ENCODE measurements at regions of chr9 and their contacts with region 1.

Region 1: GRCh38 chr9:38088006-38088925 is 19.2 kb upstream of the SHB start:
- DNase-seq: peak; percentile 22 to 51 (median 37)
- H3K4me3 ChIP-seq: no peak overlapping the region
- H3K27ac ChIP-seq: no peak overlapping the region
- H3K4me1 ChIP-seq: peaks cover 0 to 12% (median 2%) of the 10 kb centered on the region in 4 experiments
- H3K27me3 ChIP-seq: no peaks in the 10 kb centered on the region

Region 2: DNA sequence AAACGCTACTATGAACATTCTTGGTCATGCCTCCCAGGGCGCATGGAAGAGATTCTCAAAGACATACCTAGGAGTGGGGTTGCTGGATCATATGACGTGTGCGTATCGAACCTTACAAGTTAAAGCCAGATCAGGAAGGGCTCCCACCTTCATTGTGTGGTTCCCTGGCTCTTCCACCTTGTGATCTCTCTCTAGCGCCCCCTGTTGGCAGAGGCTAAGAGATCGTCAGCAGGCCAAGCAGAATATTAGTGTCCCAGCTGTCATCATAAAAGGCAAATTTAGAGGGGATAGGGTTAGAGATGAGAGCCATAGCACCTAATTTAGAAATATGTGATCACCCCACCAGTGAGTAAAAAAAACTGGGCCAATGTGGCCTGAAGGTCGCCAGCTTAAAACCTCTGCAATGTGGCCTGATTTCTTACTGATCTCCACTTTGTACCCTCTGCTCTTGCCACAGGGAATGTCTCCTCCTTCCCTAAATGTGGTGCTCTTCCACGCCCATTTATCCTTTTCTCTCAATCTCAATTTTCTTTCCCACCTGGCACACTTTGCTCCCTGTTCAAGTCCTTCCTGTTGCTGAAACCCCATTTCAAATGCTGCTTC is 72.4 kb after region 1 on chr9:
- CTCF ChIA-PET with region 1: interaction called, 10 read pairs
- POLR2A ChIA-PET with region 1: no interaction called
- DNase-seq: peak; percentile 61 to 75 (median 63)
- H3K4me3 ChIP-seq: no peak overlapping the region
- H3K27ac ChIP-seq: no peak overlapping the region
- H3K4me1 ChIP-seq: peaks cover 0 to 21% (median 18%) of the 10 kb centered on the region in 4 experiments
- H3K27me3 ChIP-seq: no peaks in the 10 kb centered on the region

Region 3: DNA sequence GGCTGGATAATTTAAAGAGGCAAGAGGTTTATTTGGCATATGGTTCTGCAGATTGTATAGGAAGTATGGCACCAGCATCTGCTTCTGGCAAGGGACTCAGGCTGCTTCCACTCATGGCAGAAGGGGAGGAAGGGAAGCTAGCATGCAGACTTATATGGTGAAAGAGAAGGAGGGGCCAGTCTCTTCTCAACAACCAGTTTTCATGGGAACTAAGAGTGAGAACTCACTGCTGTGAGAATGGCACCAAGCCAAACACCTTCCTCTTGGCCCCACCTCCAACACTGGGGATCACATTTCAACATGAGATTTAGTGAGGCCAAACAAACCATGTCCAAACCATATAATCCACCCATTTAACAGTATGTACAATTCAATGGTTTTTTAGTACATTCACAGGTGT is 94.1 kb after region 1 on chr9:
- CTCF ChIA-PET with region 1: no interaction called
- POLR2A ChIA-PET with region 1: no interaction called
- DNase-seq: no peak
- H3K4me3 ChIP-seq: no peak overlapping the region
- H3K27ac ChIP-seq: no peak overlapping the region
- H3K4me1 ChIP-seq: peaks cover 4 to 25% (median 14%) of the 10 kb centered on the region in 4 experiments
- H3K27me3 ChIP-seq: no peaks in the 10 kb centered on the region

Region 4: DNA sequence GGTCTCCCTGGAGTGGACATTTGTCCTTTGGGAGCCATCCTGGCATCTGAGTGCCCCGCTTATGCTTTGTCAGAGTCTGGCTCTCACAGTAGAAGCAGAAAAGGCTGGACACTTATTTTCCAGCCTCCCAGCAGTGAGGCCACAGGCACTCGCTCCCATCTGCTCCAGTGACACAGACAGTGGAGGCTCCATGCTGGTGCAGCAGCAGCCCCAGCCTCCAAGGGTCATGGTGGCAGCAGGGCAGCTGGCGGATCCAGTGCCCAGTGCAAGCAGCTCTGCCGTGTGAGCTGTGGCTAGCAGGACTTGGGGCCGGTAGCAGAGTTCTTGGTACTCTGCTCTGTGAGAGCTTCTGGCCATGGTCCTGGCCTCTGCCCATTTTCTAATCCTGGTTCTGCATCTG is 147.0 kb after region 1 on chr9:
- CTCF ChIA-PET with region 1: no interaction called
- POLR2A ChIA-PET with region 1: no interaction called
- DNase-seq: no peak
- H3K4me3 ChIP-seq: no peak overlapping the region
- H3K27ac ChIP-seq: no peak overlapping the region
- H3K4me1 ChIP-seq: peaks cover 0 to 12% (median 8%) of the 10 kb centered on the region in 4 experiments
- H3K27me3 ChIP-seq: no peaks in the 10 kb centered on the region

Region 5: GRCh38 chr9:38263532-38263931 is 175.3 kb after region 1 on chr9:
- CTCF ChIA-PET with region 1: interaction called, 20 read pairs
- POLR2A ChIA-PET with region 1: no interaction called
- DNase-seq: peak; percentile 24 to 51 (median 51)
- H3K4me3 ChIP-seq: no peak overlapping the region
- H3K27ac ChIP-seq: no peak overlapping the region
- H3K4me1 ChIP-seq: no peaks in the 10 kb centered on the region
- H3K27me3 ChIP-seq: no peaks in the 10 kb centered on the region